ENCODE measurements at regions of chr2 and their contacts with region 1.

Region 1: GRCh38 chr2:96638144-96639121 is at the start of gene KANSL3:
- DNase-seq: peak; percentile 90
- H3K4me3 Mint-ChIP-seq: peak within 1 kb of the TSS; percentile 98
- H3K27ac Mint-ChIP-seq: peak within 1 kb of the TSS; percentile 97
- H3K4me1 Mint-ChIP-seq: peaks cover 39% of the 10 kb centered on the region
- H3K27me3 Mint-ChIP-seq: peaks cover 9% of the 10 kb centered on the region
- total RNA-seq, gene KANSL3: 51.8 and 55.0 TPM in 2 replicates

Region 2: DNA sequence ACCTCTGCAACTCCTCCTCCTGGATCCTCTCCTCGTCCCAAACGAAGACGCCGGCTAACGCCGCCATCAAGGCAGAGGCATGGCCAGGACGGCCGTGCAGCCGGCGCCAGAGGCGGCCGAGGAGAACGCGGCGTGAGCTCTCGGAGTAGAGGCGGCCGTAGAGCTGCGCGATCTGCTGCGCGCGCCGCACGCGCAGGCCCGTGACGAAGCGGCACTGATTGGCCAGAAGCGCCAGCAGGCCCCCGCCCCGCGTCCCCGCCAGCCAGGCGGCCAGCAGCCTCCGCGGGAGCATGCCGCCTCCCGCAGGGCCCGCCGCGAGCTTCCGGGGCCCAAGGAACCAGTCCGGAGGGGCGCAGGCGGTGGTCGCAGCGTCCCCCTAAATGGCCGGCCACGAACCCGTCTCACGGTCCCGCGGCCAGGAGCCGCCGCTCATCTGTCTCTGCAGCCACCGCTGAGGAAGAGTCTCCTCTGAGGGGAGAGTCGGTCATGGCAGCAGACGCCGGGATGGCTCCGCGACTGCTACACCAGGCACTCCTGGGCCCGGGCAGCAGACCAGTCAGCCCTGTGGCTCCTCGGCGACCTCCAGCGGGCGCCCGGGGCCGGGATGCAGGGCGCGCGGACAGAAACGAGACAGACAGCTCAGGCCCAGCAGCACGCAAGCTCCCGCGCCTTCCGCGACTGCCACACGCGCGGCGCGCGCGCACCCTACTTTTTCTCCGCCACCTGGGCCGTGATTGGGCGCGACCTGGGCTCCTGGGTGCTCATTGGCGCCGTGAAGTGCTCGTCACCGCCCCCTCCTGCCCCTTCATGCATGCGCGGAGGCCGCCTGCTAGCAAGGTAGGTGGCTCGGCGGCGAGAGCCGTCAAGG is 430.1 kb before region 1 on chr2 and contains the start of gene STARD7:
- intact Hi-C with region 1: loop called (anchors 5 kb)
- DNase-seq: peak; percentile 98
- H3K4me3 Mint-ChIP-seq: peak within 1 kb of the TSS; percentile 96
- H3K27ac Mint-ChIP-seq: peak within 1 kb of the TSS; percentile 94
- H3K4me1 Mint-ChIP-seq: peaks cover 57% of the 10 kb centered on the region
- H3K27me3 Mint-ChIP-seq: no peaks in the 10 kb centered on the region
- total RNA-seq, gene STARD7: 216 and 229 TPM in 2 replicates

Region 3: DNA sequence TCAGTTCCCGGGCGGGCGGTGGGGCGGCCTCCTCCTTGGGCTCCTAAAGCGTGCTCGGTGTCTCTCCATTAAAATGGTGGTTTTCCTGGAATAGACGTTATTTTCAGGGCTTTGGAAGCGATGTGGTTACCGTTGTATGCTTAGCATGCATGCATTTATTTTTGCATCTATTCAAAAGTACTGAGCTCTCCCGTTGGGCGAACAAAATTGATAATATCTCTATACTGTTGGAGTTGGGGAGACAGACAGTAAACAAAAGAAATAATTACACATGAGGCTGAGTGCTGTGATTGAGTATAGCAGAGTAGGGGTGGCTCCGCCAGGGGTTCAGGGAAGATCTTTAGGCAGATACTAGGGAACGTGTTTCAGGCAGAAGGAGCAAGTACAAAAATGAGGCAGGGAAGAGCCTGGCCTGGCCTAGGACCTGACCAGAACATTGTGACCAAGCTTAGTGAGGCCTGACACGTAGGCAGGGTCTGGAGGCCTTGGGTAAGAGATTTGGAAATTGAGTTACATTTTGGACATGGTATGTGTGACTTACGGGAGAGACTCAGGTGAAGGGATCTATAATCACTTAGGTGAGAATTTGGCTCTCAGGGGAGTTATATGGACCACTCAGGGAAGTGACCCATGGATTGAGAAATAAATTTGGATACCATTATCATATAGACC is 302.2 kb before region 1 on chr2:
- intact Hi-C with region 1: loop called (anchors 1 kb)
- DNase-seq: no peak
- H3K4me3 Mint-ChIP-seq: peak overlapping the region; percentile 95
- H3K27ac Mint-ChIP-seq: peak overlapping the region; percentile 93
- H3K4me1 Mint-ChIP-seq: peaks cover 67% of the 10 kb centered on the region
- H3K27me3 Mint-ChIP-seq: no peaks in the 10 kb centered on the region

Region 4: DNA sequence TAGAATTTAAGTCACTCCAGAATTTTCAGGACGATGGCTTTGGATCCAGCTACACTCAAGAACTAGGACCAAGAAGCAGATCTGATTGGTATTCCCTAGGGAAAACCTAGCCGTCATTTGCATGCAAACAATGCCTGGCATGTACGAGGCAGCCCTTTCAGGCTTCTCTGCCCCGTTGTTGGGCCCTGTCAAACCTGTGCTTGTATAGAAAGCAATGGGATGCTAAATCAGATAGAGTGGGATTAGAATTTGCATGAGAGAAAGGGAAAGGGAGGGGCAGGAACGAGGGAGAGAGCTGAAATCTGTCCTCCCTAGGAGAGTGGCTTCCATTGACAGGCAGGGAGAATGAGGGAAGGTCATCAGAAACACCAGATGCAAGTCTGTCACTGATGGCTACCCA is 73.3 kb before region 1 on chr2:
- intact Hi-C with region 1: no loop called
- DNase-seq: no peak
- H3K4me3 Mint-ChIP-seq: no peak overlapping the region
- H3K27ac Mint-ChIP-seq: no peak overlapping the region
- H3K4me1 Mint-ChIP-seq: no peaks in the 10 kb centered on the region
- H3K27me3 Mint-ChIP-seq: peaks cover 7% of the 10 kb centered on the region

Region 5: GRCh38 chr2:96602330-96602823 is 36.1 kb before region 1 on chr2:
- intact Hi-C with region 1: loop called (anchors 5 kb)
- DNase-seq: no peak
- H3K4me3 Mint-ChIP-seq: no peak overlapping the region
- H3K27ac Mint-ChIP-seq: peak overlapping the region; percentile 47
- H3K4me1 Mint-ChIP-seq: peaks cover 41% of the 10 kb centered on the region
- H3K27me3 Mint-ChIP-seq: no peaks in the 10 kb centered on the region

Region 6: DNA sequence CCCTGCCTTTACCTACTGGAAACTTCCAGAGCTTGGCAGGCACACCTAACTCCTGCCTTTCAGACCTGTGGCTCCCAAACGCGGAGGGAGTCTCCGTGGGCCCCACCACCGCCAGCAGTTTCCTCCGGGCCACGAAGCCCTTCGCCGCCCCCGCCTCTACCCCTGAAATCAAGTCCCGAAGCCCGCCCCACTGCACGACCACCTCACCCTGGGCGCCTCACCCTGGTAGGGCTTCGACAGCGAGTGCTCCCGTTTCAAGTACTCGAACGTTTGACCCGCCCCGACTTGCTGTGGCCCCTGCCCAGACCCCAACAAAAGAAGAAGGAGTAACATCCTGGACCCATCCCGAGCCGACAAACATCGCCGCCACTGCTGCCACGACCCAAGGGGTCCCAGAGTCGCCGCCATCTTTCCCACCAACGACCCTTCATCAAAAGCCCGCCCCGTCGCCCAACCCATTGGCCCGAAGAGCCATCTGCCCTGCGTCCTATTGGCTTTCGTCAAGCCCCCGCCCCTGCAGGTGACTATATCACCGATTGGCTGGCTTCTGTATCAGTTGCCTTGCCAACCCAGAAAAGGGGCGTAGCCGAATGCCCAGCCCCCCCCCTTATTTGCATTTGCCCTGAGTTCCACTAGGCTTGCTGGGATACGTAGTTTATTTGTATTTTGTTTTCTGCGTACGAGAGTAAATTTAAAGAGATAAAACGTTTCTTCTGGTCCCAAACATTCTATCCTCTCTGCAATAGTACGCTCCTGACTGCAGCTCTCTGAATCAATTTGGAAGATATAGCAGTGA is 101.4 kb after region 1 on chr2 and contains the start of gene LMAN2L:
- intact Hi-C with region 1: loop called (anchors 1 kb)
- DNase-seq: peak; percentile 94
- H3K4me3 Mint-ChIP-seq: peak within 1 kb of the TSS; percentile 90
- H3K27ac Mint-ChIP-seq: peak within 1 kb of the TSS; percentile 77
- H3K4me1 Mint-ChIP-seq: peaks cover 32% of the 10 kb centered on the region
- H3K27me3 Mint-ChIP-seq: no peaks in the 10 kb centered on the region
- total RNA-seq, gene LMAN2L: 5.6 and 6.0 TPM in 2 replicates

Region 7: DNA sequence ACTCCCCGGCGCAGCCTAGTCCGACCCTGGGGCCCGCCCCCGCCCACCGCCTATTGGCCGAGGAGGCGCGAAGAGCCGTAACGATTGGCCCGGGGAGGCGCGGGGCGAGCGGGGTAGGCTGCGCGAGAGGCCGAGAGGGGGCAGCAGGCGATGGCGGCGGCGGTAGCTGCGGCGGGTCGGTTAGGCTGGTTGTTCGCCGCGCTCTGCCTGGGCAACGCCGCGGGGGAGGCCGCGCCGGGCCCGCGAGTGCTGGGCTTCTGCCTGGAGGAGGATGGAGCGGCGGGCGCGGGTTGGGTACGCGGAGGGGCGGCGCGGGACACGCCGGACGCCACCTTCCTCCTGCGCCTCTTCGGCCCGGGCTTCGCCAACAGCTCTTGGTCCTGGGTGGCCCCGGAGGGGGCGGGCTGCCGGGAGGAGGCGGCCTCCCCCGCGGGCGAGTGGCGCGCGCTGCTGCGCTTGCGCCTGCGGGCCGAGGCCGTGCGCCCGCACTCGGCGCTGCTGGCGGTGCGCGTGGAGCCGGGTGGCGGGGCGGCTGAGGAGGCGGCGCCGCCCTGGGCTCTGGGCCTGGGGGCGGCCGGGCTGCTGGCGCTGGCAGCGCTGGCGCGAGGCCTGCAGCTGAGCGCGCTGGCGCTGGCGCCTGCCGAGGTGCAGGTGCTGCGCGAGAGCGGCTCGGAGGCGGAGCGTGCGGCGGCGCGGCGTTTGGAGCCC is 177.8 kb after region 1 on chr2 and contains the start of gene CNNM3:
- intact Hi-C with region 1: loop called (anchors 1 kb)
- DNase-seq: peak; percentile 97
- H3K4me3 Mint-ChIP-seq: peak within 1 kb of the TSS; percentile 93
- H3K27ac Mint-ChIP-seq: peak within 1 kb of the TSS; percentile 91
- H3K4me1 Mint-ChIP-seq: peaks cover 54% of the 10 kb centered on the region
- H3K27me3 Mint-ChIP-seq: no peaks in the 10 kb centered on the region
- total RNA-seq, gene CNNM3: 26.1 and 31.4 TPM in 2 replicates

Region 8: DNA sequence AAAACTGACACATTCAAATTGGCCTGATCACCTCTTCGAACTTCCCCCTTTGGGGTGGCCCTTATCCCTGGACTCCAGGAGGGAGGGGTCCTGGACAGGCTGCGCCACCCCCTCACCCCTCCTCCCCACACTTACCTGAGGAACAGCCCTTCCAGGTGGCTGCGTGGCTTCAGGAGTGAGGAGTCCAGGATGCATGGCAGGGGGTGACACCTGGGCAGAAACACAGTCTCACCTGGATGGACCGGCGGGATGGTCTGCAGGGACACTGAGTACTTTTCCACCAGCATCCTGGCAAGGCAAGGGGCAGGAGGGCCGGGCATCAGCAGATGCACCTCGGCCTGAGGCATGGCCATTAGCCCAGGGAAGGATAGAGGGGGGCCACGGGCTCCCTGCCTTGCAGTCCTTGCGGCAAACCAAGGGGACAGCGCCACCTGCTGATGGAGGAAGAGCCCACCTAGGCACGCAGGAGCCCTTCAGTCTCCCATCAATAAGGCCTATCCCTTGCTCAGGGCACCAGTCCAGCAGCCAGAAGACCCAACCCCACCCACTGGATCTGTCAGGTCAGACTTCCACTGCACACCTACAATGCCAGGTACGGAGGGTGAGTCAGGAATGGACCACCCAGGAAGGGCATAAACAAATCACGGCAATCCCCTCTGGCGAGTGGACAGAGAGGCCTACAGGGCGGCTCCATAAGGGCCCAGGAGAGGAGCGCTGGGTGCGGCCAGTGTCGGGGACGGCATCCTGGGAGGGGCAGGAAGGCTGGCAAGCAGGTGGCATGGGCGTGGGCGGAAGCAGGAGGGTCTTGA is 321.9 kb after region 1 on chr2:
- intact Hi-C with region 1: loop called (anchors 5 kb)
- DNase-seq: peak; percentile 70
- H3K4me3 Mint-ChIP-seq: peak overlapping the region; percentile 47
- H3K27ac Mint-ChIP-seq: peak overlapping the region; percentile 67
- H3K4me1 Mint-ChIP-seq: peaks cover 55% of the 10 kb centered on the region
- H3K27me3 Mint-ChIP-seq: no peaks in the 10 kb centered on the region

Measured in activated T-helper 1 cell treated with anti-CD3 and anti-CD28 coated beads, Interleukin-12 subunit alpha, Interleukin-12 subunit beta, Interleukin-2, Interleukin-4 antibody, amounts not matched to agents 30 ng/mL and 10 ng/mL and 1 ng/mL, durations not matched to agents 14 hours and 24 hours and 36 hours (primary cell).